HepG2 (cell line): ENCODE measurements at regions of chr11 and their contacts with region 1.

Region 1: DNA sequence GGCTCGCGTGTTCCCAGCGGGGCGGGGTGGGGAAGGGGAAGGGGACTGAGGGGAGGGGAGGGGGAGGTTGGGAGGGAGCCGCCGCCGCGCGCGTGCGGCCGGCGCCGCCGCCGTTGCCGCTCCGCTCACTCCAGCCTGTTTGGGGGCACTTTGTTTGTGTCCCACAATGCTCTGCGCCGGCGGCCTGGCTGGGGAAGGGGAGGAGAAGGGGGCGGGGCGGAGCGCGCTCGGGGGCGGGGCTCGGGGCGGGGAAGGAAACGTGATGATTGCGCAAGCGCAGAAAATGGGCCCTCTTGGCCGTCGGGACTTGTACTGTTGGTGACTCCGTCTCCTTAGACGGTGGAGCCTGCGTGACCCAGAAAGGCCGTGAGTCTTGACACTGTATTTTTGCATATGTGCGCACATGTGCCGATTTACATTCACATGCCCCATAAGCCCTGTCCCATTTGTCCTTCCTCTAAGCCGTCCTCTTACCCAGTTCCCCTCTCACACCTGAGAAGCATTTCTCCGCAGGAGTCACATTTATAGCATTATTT is at the start of gene ZBTB44:
- DNase-seq: peak; percentile 76
- ATAC-seq: peak; percentile 88
- H3K4me3 ChIP-seq: peak within 1 kb of the TSS; percentile 75 to 90 (median 89)
- H3K27ac ChIP-seq: peak within 1 kb of the TSS; percentile 76
- H3K4me1 ChIP-seq: peaks cover 58% of the 10 kb centered on the region
- H3K27me3 ChIP-seq: no peaks in the 10 kb centered on the region
- CTCF ChIP-seq: no peak
- EP300 ChIP-seq: no peak
- POLR2A ChIP-seq: peak; percentile 38 to 62; a peak in 3 of 4 replicates
- RAD21 ChIP-seq: no peak
- total RNA-seq, gene ZBTB44: 19.5 and 23.6 TPM in 2 replicates

Region 2: GRCh38 chr11:129639300-129639699 is 675.5 kb before region 1 on chr11:
- CTCF ChIA-PET with region 1: no interaction called
- POLR2A ChIA-PET with region 1: no interaction called
- in situ Hi-C with region 1: no loop called
- intact Hi-C with region 1: loop called (anchors 5 kb)
- DNase-seq: peak; percentile 3
- ATAC-seq: no peak
- H3K4me3 ChIP-seq: no peak overlapping the region
- H3K27ac ChIP-seq: no peak overlapping the region
- H3K4me1 ChIP-seq: no peaks in the 10 kb centered on the region
- H3K27me3 ChIP-seq: peaks cover 0 to 5% of the 10 kb centered on the region in 2 experiments; a peak in 1 of 5 replicates
- CTCF ChIP-seq: no peak
- EP300 ChIP-seq: no peak
- POLR2A ChIP-seq: no peak
- RAD21 ChIP-seq: no peak

Region 3: GRCh38 chr11:130330101-130330684 is 15.4 kb after region 1 on chr11:
- CTCF ChIA-PET with region 1: no interaction called
- POLR2A ChIA-PET with region 1: no interaction called
- in situ Hi-C with region 1: no loop called
- intact Hi-C with region 1: loop called (anchors 1 kb)
- DNase-seq: no peak
- ATAC-seq: no peak
- H3K4me3 ChIP-seq: no peak overlapping the region
- H3K27ac ChIP-seq: no peak overlapping the region
- H3K4me1 ChIP-seq: peaks cover 15% of the 10 kb centered on the region
- H3K27me3 ChIP-seq: no peaks in the 10 kb centered on the region; a peak in 2 of 5 replicates
- CTCF ChIP-seq: no peak
- EP300 ChIP-seq: no peak
- POLR2A ChIP-seq: no peak
- RAD21 ChIP-seq: no peak